Heart right ventricle (tissue), 16 donors: ENCODE measurements at regions of chr1 and their contacts with region 1.

Region 1: DNA sequence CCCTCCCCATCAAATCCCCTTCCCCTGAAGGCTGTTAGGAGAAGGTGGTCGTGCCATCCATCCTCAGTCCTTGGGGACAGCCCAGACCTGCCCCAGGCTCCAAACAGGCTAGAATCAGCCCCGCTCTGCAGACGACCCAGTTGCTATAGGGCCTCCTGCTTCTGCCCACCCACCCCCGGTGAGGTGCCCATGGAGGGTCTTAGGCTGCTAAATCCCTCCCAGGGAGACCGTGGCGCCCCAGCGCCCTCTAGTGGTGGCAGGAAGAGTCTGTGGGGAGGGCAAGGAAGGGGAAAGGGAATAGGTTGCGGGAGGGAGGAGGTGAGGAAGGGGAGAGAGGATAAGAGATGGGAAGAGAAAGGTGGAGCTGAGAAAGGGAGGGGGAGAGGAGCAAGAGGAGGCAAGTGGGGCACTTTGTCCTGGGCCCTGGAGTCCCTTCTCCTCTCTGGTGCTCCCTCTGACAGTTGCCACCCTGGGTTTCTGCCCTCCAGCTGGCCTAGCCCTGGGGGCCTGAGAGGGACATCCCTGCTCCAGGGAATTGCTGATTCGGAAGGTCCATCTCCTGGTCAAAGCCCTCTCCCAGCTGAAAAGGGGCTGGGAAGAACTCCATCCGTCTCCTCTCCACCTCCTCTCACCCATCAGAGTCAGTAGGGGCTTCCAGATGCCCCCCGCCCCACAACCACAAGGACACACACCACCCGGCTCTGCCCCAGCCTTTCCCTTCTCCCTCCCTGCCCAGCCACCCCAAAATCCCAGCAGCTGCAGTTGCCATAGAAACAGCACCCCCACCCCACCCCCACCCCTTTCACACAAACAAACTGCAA is 55.4 kb downstream of the CAMK2N1 start:
- DNase-seq: peak in 1 of 2 donors; percentile 48
- ATAC-seq: peak in 6 of 8 donors; percentile 24 to 57 (median 48)
- H3K4me3 ChIP-seq: no peak overlapping the region
- H3K27ac ChIP-seq: peak overlapping the region in 5 of 10 donors; percentile 15 to 52 (median 41)
- H3K4me1 ChIP-seq: peaks cover 0 to 4% (median 0%) of the 10 kb centered on the region in 9 donors
- H3K27me3 ChIP-seq: peaks cover 3 to 63% (median 47%) of the 10 kb centered on the region in 7 donors
- CTCF ChIP-seq: peak; percentile 31 to 67 (median 59)

Region 2: DNA sequence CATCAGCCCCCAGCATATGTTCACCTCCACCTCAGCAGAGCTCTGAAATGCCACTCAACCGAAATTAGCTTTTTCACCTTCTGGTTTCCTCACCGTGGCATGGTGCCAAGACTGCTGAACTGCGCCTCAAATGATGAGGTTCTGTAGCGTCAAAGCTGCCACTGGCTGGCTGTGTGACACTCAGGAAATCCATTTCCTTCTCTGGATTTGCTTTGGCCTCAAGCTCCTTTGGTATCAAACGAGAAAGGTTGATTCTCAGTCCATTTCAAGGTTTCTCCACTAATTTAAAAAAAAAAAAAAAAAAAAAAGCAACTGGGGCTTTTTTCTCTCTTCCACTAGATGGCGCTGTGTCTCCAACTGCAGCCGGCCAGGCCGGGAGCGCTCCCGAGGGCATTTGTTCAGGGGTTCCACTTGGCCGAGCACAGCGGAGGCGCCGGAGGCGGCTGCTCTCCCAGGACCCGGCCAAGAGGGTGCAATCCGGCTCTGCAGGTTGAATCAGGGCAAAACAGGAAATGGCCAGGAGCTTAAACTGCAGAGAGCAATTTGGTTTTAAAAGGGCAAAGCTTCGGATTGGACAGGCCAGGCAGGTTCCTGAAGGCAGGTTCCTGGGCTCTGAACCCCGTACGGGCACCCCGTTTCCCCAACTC is 217.8 kb before region 1 on chr1:
- intact Hi-C with region 1: loop called in 4 of 10 experiments (anchors 2 to 5 kb)
- DNase-seq: peak; percentile 50 to 66
- ATAC-seq: peak; percentile 60 to 83 (median 70)
- H3K4me3 ChIP-seq: no peak overlapping the region
- H3K27ac ChIP-seq: no peak overlapping the region
- H3K4me1 ChIP-seq: peaks cover 0 to 11% (median 8%) of the 10 kb centered on the region in 9 donors
- H3K27me3 ChIP-seq: peaks cover 0 to 62% (median 40%) of the 10 kb centered on the region in 7 donors
- CTCF ChIP-seq: peak; percentile 75 to 88 (median 79)

Region 3: GRCh38 chr1:20233394-20233793 is 197.2 kb before region 1 on chr1:
- intact Hi-C with region 1: loop called in 1 of 10 experiments (anchors 5 kb)
- DNase-seq: no peak
- ATAC-seq: peak in 2 of 8 donors; percentile 27 to 42
- H3K4me3 ChIP-seq: no peak overlapping the region
- H3K27ac ChIP-seq: no peak overlapping the region
- H3K4me1 ChIP-seq: peaks cover 0 to 6% (median 0%) of the 10 kb centered on the region in 9 donors
- H3K27me3 ChIP-seq: peaks cover 0 to 67% (median 48%) of the 10 kb centered on the region in 7 donors
- CTCF ChIP-seq: peak in 7 of 9 donors; percentile 32 to 44 (median 40)

Region 4: GRCh38 chr1:20472860-20473711 is 42.5 kb after region 1 on chr1:
- intact Hi-C with region 1: loop called in 1 of 10 experiments (anchors 5 kb)
- DNase-seq: peak; percentile 69 to 70
- ATAC-seq: peak in 6 of 8 donors; percentile 46 to 76 (median 60)
- H3K4me3 ChIP-seq: no peak overlapping the region
- H3K27ac ChIP-seq: no peak overlapping the region
- H3K4me1 ChIP-seq: peaks cover 8 to 26% (median 21%) of the 10 kb centered on the region in 9 donors
- H3K27me3 ChIP-seq: peaks cover 11 to 58% (median 43%) of the 10 kb centered on the region in 7 donors
- CTCF ChIP-seq: no peak

Region 5: GRCh38 chr1:20485527-20486456 is 55.2 kb after region 1 on chr1 and contains the start of gene CAMK2N1:
- intact Hi-C with region 1: loop called in 1 of 10 experiments (anchors 5 kb)
- DNase-seq: peak; percentile 79 to 80
- ATAC-seq: peak; percentile 74 to 88 (median 79)
- H3K4me3 ChIP-seq: peak within 1 kb of the TSS; percentile 40 to 71 (median 63)
- H3K27ac ChIP-seq: peak within 1 kb of the TSS; percentile 73 to 87 (median 80)
- H3K4me1 ChIP-seq: peaks cover 3 to 35% (median 17%) of the 10 kb centered on the region in 9 donors
- H3K27me3 ChIP-seq: peaks cover 15 to 79% (median 64%) of the 10 kb centered on the region in 7 donors
- CTCF ChIP-seq: no peak
- total RNA-seq, gene CAMK2N1: 4.0 to 12.9 (median 8.5) TPM

Region 6: GRCh38 chr1:20615946-20616846 is 185.6 kb after region 1 on chr1:
- intact Hi-C with region 1: no loop called
- DNase-seq: peak in 1 of 2 donors; percentile 43
- ATAC-seq: peak in 6 of 8 donors; percentile 34 to 80 (median 48)
- H3K4me3 ChIP-seq: peak overlapping the region in 3 of 10 donors; percentile 2 to 7 (median 5)
- H3K27ac ChIP-seq: peak overlapping the region in 8 of 10 donors; percentile 12 to 78 (median 56)
- H3K4me1 ChIP-seq: peaks cover 5 to 42% (median 18%) of the 10 kb centered on the region in 9 donors
- H3K27me3 ChIP-seq: no peaks in the 10 kb centered on the region
- CTCF ChIP-seq: no peak